ENCODE measurements at regions of chr1 and their contacts with region 1.

Region 1: DNA sequence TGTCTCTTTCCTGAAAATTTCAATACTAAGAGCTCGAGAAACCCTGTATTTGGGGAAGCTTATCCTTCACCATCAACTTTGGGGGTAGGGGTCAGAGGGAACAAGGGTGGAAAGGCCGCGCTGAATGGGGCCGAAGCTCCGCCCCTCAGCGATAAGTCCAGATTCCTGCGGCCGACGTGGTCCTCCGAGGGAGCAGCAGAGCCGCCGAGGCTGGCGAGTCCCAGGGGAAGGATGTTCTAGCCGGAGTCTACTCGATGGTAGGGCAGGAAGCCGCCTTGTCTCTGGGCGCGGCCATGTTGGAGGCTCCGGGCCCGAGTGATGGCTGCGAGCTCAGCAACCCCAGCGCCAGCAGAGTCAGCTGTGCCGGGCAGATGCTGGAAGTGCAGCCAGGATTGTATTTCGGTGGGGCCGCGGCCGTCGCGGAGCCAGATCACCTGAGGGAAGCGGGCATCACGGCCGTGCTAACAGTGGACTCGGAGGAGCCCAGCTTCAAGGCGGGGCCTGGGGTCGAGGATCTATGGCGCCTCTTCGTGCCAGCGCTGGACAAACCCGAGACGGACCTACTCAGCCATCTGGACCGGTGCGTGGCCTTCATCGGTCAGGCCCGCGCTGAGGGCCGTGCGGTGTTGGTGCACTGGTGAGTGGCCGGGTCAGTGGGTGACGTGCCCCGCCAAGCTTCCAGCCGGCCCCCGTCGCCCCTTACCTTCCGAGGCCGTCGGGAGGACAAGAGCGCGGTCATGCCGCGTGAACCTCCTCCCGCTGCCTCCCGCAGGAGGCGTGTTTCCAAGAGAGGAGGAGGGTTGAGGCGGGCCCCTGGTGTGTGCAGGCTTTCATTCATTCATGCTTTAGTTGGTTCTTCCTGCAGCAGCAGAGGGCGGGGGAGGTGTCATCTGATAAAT is at the start of gene DUSP12:
- DNase-seq: peak; percentile 61
- H3K4me3 ChIP-seq: peak within 1 kb of the TSS; percentile 90 to 100 (median 96)
- H3K27ac ChIP-seq: peak within 1 kb of the TSS; percentile 90 to 97 (median 94)
- H3K4me1 ChIP-seq: peaks cover 0 to 27% (median 17%) of the 10 kb centered on the region in 3 donors
- H3K27me3 ChIP-seq: peaks cover 0 to 15% (median 0%) of the 10 kb centered on the region in 4 donors
- CTCF ChIP-seq: peak in 1 of 6 experiments; percentile 7
- POLR2A ChIP-seq: peak in 2 of 4 donors; percentile 18 to 49
- total RNA-seq, gene DUSP12: 6.0 to 24.0 (median 15.1) TPM

Region 2: GRCh38 chr1:161486806-161487741 is 262.7 kb before region 1 on chr1:
- intact Hi-C with region 1: loop called (anchors 10 kb)
- DNase-seq: no peak
- H3K4me3 ChIP-seq: peak overlapping the region in 3 of 4 donors; percentile 5 to 34 (median 22)
- H3K27ac ChIP-seq: peak overlapping the region in 2 of 4 donors; percentile 48 to 62
- H3K4me1 ChIP-seq: peaks cover 3 to 14% (median 8%) of the 10 kb centered on the region in 3 donors
- H3K27me3 ChIP-seq: peaks cover 0 to 69% (median 1%) of the 10 kb centered on the region in 4 donors
- CTCF ChIP-seq: peak; percentile 68 to 89 (median 80)
- POLR2A ChIP-seq: no peak

Region 3: GRCh38 chr1:161676958-161677689 is 72.6 kb before region 1 on chr1:
- intact Hi-C with region 1: no loop called
- DNase-seq: no peak
- H3K4me3 ChIP-seq: no peak overlapping the region
- H3K27ac ChIP-seq: no peak overlapping the region
- H3K4me1 ChIP-seq: no peaks in the 10 kb centered on the region
- H3K27me3 ChIP-seq: peaks cover 0 to 6% (median 0%) of the 10 kb centered on the region in 4 donors
- CTCF ChIP-seq: no peak
- POLR2A ChIP-seq: no peak